Activated naive CD4-positive, alpha-beta T cell treated with anti-CD3 and anti-CD28 coated beads for 36 hours (primary cell): ENCODE measurements at regions of chr12 and their contacts with region 1.

Region 1: DNA sequence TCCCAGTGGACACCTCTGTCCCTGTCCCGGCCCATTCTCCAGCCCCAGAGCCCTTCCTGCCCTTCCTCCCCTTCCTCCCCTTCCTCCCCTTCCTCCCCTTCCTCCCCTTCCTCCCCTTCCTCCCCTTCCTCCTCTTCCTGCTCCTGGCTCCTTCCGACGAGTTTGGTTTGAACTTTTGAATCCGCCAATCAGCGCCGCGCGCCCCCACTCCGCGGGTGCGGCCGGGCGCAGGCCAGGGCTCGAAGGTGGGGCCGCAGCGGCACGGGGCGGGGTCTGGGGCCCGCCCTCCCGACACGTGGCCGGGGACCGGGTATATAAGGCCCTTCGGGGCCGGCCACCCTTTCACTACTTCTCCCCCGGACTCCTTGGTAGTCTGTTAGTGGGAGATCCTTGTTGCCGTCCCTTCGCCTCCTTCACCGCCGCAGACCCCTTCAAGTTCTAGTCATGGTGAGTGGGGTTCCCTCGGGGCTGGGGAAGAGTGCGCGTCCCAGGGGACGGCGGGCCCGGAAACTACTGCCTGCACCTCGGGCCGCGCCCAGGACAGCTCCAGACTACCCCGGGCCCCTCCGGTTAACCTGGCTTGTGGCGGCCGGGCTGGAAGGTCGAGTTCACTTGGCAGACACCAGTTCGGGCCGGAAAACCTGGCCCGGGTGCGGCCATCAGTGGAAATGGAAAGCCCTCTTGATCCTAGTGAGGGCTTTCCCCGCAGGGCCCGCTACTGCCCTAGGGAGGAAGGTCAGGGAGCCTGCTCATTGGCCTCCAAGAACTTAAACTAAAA is at the start of gene TUBA1C:
- DNase-seq: peak; percentile 91
- H3K4me3 Mint-ChIP-seq: peak within 1 kb of the TSS; percentile 97
- H3K27ac Mint-ChIP-seq: peak within 1 kb of the TSS; percentile 96
- H3K4me1 Mint-ChIP-seq: peaks cover 50% of the 10 kb centered on the region
- H3K27me3 Mint-ChIP-seq: peaks cover 2% of the 10 kb centered on the region
- total RNA-seq, gene TUBA1C: 214 to 227 TPM

Region 2: DNA sequence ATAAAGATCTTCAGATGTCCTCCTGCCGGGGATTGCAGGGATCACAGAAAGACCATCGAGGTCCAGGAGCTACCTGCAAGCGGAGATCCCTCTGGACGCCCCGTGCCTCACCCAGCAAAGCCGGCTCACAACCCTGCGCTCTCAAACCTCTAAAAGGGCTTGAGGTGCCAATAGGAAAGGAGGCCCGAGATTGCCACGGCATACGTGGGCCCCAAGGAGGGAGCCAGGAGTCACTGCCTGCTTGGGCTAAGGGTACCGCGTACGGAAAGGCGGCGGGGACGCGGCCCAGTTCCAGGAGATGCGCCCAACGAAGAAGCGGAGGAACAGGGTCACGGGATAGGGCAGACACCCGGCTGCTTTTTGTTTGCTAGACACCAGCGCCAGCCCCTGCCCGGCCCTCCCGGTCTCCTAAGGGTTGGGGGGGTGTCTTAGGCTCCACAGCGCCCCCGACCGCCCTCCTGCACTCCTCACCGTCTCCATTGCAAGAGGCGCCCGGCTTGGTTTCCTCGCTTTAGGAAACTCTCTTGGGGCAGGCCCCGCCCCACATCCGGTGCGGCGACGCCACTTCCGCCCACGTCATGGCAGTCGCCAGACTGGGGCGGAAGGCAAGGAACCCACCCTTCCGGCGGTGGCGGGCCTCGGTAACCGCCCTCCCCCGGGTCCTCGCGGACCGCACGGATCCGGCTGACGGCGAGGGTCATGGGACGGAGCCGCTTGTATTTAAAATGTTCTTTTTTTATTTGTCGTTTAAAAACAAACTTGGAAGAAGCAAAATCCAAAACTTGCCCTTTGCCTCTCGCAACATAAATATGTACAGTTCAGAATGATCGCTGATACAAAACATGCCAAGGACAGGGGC is 246.4 kb before region 1 on chr12 and contains the start of gene PRKAG1:
- CTCF ChIA-PET with region 1: no interaction called
- intact Hi-C with region 1: loop called (anchors 1 kb)
- DNase-seq: peak; percentile 96
- H3K4me3 Mint-ChIP-seq: peak within 1 kb of the TSS; percentile 87
- H3K27ac Mint-ChIP-seq: peak within 1 kb of the TSS; percentile 94
- H3K4me1 Mint-ChIP-seq: peaks cover 36% of the 10 kb centered on the region
- H3K27me3 Mint-ChIP-seq: no peaks in the 10 kb centered on the region
- total RNA-seq, gene PRKAG1: 49.4 to 50.9 TPM

Region 3: GRCh38 chr12:49110464-49111155 is 154.3 kb before region 1 on chr12 and contains the start of gene LMBR1L:
- CTCF ChIA-PET with region 1: no interaction called
- intact Hi-C with region 1: loop called (anchors 1 kb)
- DNase-seq: peak; percentile 98
- H3K4me3 Mint-ChIP-seq: peak within 1 kb of the TSS; percentile 93
- H3K27ac Mint-ChIP-seq: peak within 1 kb of the TSS; percentile 94
- H3K4me1 Mint-ChIP-seq: peaks cover 37% of the 10 kb centered on the region
- H3K27me3 Mint-ChIP-seq: no peaks in the 10 kb centered on the region
- total RNA-seq, gene LMBR1L: 60.1 to 66.8 TPM

Region 4: GRCh38 chr12:49161092-49161795 is 103.7 kb before region 1 on chr12:
- CTCF ChIA-PET with region 1: no interaction called
- intact Hi-C with region 1: no loop called
- DNase-seq: no peak
- H3K4me3 Mint-ChIP-seq: no peak overlapping the region
- H3K27ac Mint-ChIP-seq: no peak overlapping the region
- H3K4me1 Mint-ChIP-seq: no peaks in the 10 kb centered on the region
- H3K27me3 Mint-ChIP-seq: no peaks in the 10 kb centered on the region

Region 5: GRCh38 chr12:49188914-49189367 is 76.0 kb before region 1 on chr12 and contains the start of gene TUBA1A:
- CTCF ChIA-PET with region 1: no interaction called
- intact Hi-C with region 1: loop called (anchors 1 kb)
- DNase-seq: peak; percentile 97
- H3K4me3 Mint-ChIP-seq: peak within 1 kb of the TSS; percentile 84
- H3K27ac Mint-ChIP-seq: peak within 1 kb of the TSS; percentile 86
- H3K4me1 Mint-ChIP-seq: peaks cover 13% of the 10 kb centered on the region
- H3K27me3 Mint-ChIP-seq: no peaks in the 10 kb centered on the region
- total RNA-seq, gene TUBA1A: 47.4 to 49.1 TPM

Region 6: GRCh38 chr12:49296034-49296835 is 31.3 kb after region 1 on chr12:
- CTCF ChIA-PET with region 1: interaction called, 4 read pairs
- intact Hi-C with region 1: loop called (anchors 2 kb)
- DNase-seq: peak; percentile 70
- H3K4me3 Mint-ChIP-seq: peak overlapping the region; percentile 50
- H3K27ac Mint-ChIP-seq: no peak overlapping the region
- H3K4me1 Mint-ChIP-seq: peaks cover 12% of the 10 kb centered on the region
- H3K27me3 Mint-ChIP-seq: peaks cover 54% of the 10 kb centered on the region

Region 7: GRCh38 chr12:49342066-49342913 is 77.4 kb after region 1 on chr12:
- CTCF ChIA-PET with region 1: interaction called, 7 read pairs
- intact Hi-C with region 1: loop called (anchors 1 kb)
- DNase-seq: peak; percentile 90
- H3K4me3 Mint-ChIP-seq: no peak overlapping the region
- H3K27ac Mint-ChIP-seq: no peak overlapping the region
- H3K4me1 Mint-ChIP-seq: peaks cover 48% of the 10 kb centered on the region
- H3K27me3 Mint-ChIP-seq: peaks cover 78% of the 10 kb centered on the region

Region 8: GRCh38 chr12:49828133-49829091 is 563.5 kb after region 1 on chr12 and contains the start of gene NCKAP5L:
- CTCF ChIA-PET with region 1: no interaction called
- intact Hi-C with region 1: loop called (anchors 10 kb)
- DNase-seq: peak; percentile 94
- H3K4me3 Mint-ChIP-seq: peak within 1 kb of the TSS; percentile 92
- H3K27ac Mint-ChIP-seq: peak within 1 kb of the TSS; percentile 86
- H3K4me1 Mint-ChIP-seq: peaks cover 27% of the 10 kb centered on the region
- H3K27me3 Mint-ChIP-seq: no peaks in the 10 kb centered on the region
- total RNA-seq, gene NCKAP5L: 2.8 TPM

Region 9: GRCh38 chr12:49866859-49867579 is 602.1 kb after region 1 on chr12:
- CTCF ChIA-PET with region 1: no interaction called
- intact Hi-C with region 1: no loop called
- DNase-seq: peak; percentile 86
- H3K4me3 Mint-ChIP-seq: no peak overlapping the region
- H3K27ac Mint-ChIP-seq: no peak overlapping the region
- H3K4me1 Mint-ChIP-seq: no peaks in the 10 kb centered on the region
- H3K27me3 Mint-ChIP-seq: no peaks in the 10 kb centered on the region